ENCODE measurements at regions of chr1 and their contacts with region 1.

Region 1: DNA sequence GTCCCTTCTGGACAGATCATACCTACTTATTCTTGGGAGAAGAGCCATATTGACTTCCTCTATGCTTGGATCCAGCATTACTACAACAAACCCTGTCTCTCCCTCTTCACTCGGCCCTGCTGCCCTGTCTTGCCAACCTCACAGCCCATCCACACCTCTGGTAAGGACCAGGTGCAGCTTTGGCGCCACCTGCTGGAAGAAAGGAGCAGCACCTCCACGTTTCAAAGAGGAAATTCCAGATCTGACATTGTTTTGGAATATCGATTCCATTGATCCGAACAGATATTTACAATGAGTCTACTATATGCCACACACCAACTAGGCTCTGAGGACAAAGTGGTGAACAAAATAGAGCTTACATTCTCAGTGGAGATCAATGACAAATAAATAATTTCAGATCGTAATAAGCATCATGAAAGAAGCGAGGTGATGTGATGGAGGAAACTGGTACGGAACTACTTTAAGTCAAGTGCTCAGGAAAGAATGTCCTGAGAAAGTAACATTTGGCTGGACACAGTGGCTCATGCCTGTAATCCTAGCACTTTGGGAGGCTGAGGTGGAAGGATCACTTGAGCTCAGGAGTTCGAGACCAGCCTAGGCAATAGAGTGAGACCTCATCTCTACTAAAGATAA is 18.7 kb downstream of the MFSD2A start:
- H3K4me3 ChIP-seq: no peak overlapping the region
- H3K27ac ChIP-seq: no peak overlapping the region
- H3K4me1 ChIP-seq: no peaks in the 10 kb centered on the region
- CTCF ChIP-seq: peak; percentile 89

Region 2: GRCh38 chr1:39711104-39711965 is 262.3 kb before region 1 on chr1:
- CTCF ChIA-PET with region 1: no interaction called
- POLR2A ChIA-PET with region 1: no interaction called
- H3K4me3 ChIP-seq: no peak overlapping the region
- H3K27ac ChIP-seq: no peak overlapping the region
- H3K4me1 ChIP-seq: no peaks in the 10 kb centered on the region
- CTCF ChIP-seq: no peak

Region 3: DNA sequence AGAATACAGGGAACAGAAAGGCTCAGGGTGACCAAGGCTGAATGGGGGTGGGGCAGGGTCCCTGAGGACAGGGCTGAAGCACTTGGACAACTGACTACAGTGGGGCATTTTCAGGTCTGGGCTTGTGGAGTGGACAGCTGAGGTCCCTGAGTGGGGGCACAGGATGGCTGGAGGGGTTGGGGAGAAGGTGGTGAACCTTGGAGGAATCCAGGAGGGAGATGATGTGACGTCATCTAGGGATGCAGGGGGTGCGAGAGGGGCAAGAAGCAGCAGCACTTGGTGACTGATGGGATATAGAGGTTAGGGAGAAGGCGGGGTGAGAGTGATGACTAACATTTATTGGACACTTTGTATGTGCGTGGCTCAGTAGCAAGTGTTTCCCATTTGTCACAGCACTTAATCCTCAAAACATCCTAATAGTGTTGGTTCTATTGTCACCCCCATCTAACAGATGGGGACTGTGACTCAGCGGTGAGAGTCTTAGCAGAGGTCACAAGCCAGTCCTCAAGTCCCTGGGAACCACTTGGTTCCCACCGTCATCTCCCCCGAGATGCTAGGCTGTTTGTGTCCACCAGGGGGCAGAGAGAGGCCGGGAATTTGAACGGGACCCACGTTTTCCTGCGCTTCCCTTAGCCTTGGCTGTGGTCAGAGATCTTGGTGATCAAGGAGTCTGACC is 157.1 kb before region 1 on chr1:
- CTCF ChIA-PET with region 1: interaction called, 19 read pairs
- POLR2A ChIA-PET with region 1: no interaction called
- H3K4me3 ChIP-seq: no peak overlapping the region
- H3K27ac ChIP-seq: no peak overlapping the region
- H3K4me1 ChIP-seq: no peaks in the 10 kb centered on the region
- CTCF ChIP-seq: peak; percentile 76

Region 4: GRCh38 chr1:39901698-39902459 is 71.7 kb before region 1 on chr1 and contains the start of gene MYCL:
- CTCF ChIA-PET with region 1: interaction called, 10 read pairs
- POLR2A ChIA-PET with region 1: no interaction called
- H3K4me3 ChIP-seq: peak within 1 kb of the TSS; percentile 73
- H3K27ac ChIP-seq: peak within 1 kb of the TSS; percentile 48; the same call in 1 of the 2 replicates
- H3K4me1 ChIP-seq: 0 out of 2 replicates have a peak, but pooled peaks cover 2% of the 10 kb centered on the region
- CTCF ChIP-seq: peak; percentile 96

Region 5: DNA sequence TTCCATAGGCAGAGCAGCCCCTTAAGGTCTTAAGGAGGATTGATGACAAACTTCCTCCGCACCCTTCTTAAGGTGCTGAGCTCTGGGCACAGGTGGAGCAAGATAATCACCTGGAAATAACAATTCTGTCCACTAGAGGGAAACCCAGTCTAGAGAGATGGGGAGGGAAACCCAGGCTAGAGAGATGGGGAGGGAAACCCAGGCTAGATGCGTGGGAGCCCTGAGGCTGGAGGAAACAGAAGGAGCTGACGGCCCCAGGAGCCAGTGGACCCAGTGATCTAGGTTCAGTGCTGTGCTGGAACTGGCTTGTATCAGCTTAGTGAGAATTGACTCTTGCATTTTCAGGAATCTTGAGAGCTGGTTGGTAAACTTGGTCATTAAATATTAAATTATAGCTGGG is 54.1 kb before region 1 on chr1:
- CTCF ChIA-PET with region 1: interaction called, 188 read pairs
- POLR2A ChIA-PET with region 1: interaction called, 10 read pairs
- H3K4me3 ChIP-seq: no peak overlapping the region
- H3K27ac ChIP-seq: no peak overlapping the region
- H3K4me1 ChIP-seq: no peaks in the 10 kb centered on the region
- CTCF ChIP-seq: peak; percentile 64; the same call in 1 of the 2 replicates

Region 6: GRCh38 chr1:39954816-39955546 is 18.6 kb before region 1 on chr1 and contains the start of gene MFSD2A:
- CTCF ChIA-PET with region 1: interaction called, 13 read pairs
- POLR2A ChIA-PET with region 1: interaction called, 4 read pairs
- H3K4me3 ChIP-seq: peak within 1 kb of the TSS; percentile 49
- H3K27ac ChIP-seq: no peak within 1 kb of the TSS; the same call in 1 of the 2 replicates
- H3K4me1 ChIP-seq: no peaks in the 10 kb centered on the region
- CTCF ChIP-seq: no peak

Region 7: DNA sequence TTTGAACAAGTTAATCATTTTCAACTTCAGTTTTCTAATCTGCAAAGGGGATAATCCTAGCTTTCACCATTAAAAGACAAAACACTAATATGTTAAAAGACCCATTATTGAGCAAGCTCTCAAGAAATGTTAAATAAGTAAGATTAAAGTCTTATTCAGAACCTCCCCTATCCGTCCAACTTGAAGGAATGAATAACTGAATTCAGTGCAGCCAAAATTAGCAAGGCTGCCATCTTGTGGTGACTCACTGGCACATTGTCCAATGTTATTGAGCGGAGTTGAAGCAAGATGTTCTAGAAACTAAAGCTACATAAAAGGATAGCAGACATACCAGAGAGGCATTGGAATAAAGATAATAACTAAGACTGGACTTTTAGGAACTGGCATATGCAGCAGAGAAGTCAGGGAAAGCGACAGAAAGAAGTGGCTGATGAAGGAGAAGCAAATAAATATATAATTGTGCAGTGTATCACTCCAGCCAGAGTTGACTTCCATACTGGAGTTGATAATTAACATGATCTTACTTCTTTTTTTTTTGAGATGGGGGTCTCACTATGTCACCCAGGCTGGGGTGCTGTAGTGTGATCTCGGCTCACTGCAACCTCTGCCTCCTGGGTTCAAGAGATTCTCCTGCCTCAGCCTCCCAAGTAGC is 58.7 kb after region 1 on chr1:
- CTCF ChIA-PET with region 1: interaction called, 46 read pairs
- POLR2A ChIA-PET with region 1: no interaction called
- H3K4me3 ChIP-seq: no peak overlapping the region
- H3K27ac ChIP-seq: no peak overlapping the region
- H3K4me1 ChIP-seq: no peaks in the 10 kb centered on the region
- CTCF ChIP-seq: 0 out of 2 replicates have a peak, but pooled peaks have one; percentile 28

Measured in HEK293 (cell line).